ENCODE measurements at regions of chr2 and their contacts with region 1.

Region 1: GRCh38 chr2:216215658-216216390 is 106.7 kb downstream of the XRCC5 start:
- DNase-seq: no peak
- ATAC-seq: peak; percentile 60
- H3K4me3 ChIP-seq: no peak overlapping the region
- H3K27ac ChIP-seq: peak overlapping the region; percentile 24; the same call in 1 of the 2 replicates
- H3K4me1 ChIP-seq: peaks cover 26% of the 10 kb centered on the region
- H3K27me3 ChIP-seq: no peaks in the 10 kb centered on the region
- CTCF ChIP-seq: peak; percentile 26 to 46 (median 37); a peak in 4 of 6 replicates
- EP300 ChIP-seq: no peak
- POLR2A ChIP-seq: no peak
- RAD21 ChIP-seq: peak; percentile 31; the same call in 1 of the 2 replicates

Region 2: DNA sequence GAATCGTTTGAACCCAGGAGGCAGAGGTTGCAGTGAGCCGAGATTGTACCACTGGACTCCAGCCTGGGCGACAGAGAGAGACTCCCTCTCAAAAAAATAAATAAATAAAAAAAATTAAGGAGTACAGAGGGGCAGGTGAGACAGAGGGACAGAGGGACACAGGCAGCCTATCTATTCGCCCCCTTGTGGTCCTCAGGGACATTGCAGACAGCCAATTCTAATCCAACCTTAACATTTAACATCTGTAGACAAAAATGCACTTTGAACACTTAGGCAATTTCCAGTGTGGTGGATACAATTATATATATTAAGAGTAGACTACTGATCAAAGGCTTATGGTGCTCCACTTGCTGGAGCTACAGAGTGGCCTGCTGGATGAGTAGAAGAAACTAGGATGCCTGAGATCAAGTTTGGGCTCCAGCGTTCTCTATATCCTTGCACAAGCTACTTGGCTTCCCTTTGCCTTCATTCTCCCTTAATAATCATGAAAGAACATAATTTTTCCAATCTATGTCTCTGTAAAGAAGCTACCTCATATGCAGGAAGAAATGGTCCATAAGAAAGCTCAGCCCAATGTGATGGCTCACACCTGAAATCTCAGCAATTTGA is 188.3 kb after region 1 on chr2:
- CTCF ChIA-PET with region 1: interaction called, 116 read pairs
- POLR2A ChIA-PET with region 1: no interaction called
- RAD21 ChIA-PET with region 1: interaction called, 38 read pairs
- SMC1A ChIA-PET with region 1: interaction called, 84 read pairs
- in situ Hi-C with region 1: loop called (anchors 10 kb)
- intact Hi-C with region 1: no loop called
- DNase-seq: no peak
- ATAC-seq: peak; percentile 89
- H3K4me3 ChIP-seq: no peak overlapping the region
- H3K27ac ChIP-seq: no peak overlapping the region
- H3K4me1 ChIP-seq: no peaks in the 10 kb centered on the region
- H3K27me3 ChIP-seq: no peaks in the 10 kb centered on the region; a peak in 1 of 4 replicates
- CTCF ChIP-seq: peak; percentile 65 to 86 (median 77)
- EP300 ChIP-seq: no peak
- POLR2A ChIP-seq: no peak
- RAD21 ChIP-seq: peak; percentile 64

Region 3: GRCh38 chr2:216666461-216667233 is 450.8 kb after region 1 on chr2:
- CTCF ChIA-PET with region 1: interaction called, 3 read pairs
- POLR2A ChIA-PET with region 1: no interaction called
- RAD21 ChIA-PET with region 1: no interaction called
- SMC1A ChIA-PET with region 1: no interaction called
- in situ Hi-C with region 1: loop called (anchors 10 kb)
- intact Hi-C with region 1: no loop called
- DNase-seq: peak; percentile 19
- ATAC-seq: peak; percentile 92
- H3K4me3 ChIP-seq: no peak overlapping the region
- H3K27ac ChIP-seq: no peak overlapping the region
- H3K4me1 ChIP-seq: no peaks in the 10 kb centered on the region
- H3K27me3 ChIP-seq: peaks cover 2 to 5% of the 10 kb centered on the region in 2 experiments
- CTCF ChIP-seq: peak; percentile 98 to 100 (median 98)
- EP300 ChIP-seq: no peak
- POLR2A ChIP-seq: no peak
- RAD21 ChIP-seq: peak; percentile 97